ENCODE measurements at regions of chr4 and their contacts with region 1.

Region 1: DNA sequence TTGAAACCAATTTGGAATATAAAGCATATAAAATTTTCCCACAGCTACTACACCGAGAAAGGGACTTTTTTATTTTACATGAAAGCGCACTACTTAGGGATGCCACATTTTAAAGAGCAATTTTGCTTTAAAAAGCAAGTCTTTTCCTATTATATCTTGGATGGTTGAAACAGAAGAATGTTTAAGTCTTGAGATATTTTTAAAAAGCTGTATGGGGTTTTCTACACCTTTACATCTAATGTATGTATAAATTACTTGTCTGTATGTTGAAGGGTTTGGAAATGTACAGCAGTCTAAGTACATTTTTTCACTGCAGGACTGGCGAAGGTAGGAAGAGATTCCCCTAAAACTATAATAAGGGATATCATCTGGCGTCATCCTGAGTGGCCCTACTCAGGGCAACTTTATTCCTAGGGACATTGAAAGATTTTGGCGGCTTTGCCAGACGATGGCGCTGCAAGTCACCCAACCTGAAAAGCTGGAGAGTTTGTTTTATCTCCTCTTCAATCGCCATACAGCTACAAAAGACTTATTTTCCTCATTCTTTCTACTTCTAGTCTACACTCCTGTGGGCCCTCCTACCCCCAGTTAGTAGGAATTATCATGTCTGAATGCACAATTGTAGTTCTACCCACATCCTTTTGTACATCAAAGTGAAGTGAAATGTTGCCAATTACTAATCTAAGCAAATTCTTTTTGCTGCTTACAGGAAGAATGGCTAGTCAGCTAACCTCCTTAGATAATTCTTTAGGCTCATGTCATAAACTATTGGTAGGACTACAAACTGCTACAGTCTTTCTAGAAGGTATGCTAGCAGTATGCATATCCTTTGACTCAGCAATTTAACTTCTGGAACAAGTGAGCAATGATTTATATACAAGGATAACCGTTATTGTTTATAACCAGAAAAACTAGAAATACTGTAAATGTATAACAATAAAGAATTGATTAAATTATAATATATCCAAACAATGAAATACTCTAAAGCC is 782 bp upstream of the NEK1 start:
- DNase-seq: peak; percentile 84
- ATAC-seq: peak; percentile 28
- H3K4me3 Mint-ChIP-seq: peak overlapping the region; percentile 94
- H3K27ac Mint-ChIP-seq: peak overlapping the region; percentile 95
- H3K4me1 Mint-ChIP-seq: peaks cover 54% of the 10 kb centered on the region
- H3K27me3 Mint-ChIP-seq: no peaks in the 10 kb centered on the region

Region 2: GRCh38 chr4:169659716-169660670 is 46.8 kb after region 1 on chr4:
- CTCF ChIA-PET with region 1: interaction called, 11 read pairs
- DNase-seq: peak; percentile 84
- ATAC-seq: peak; percentile 98
- H3K4me3 Mint-ChIP-seq: peak overlapping the region; percentile 68
- H3K27ac Mint-ChIP-seq: peak overlapping the region; percentile 90
- H3K4me1 Mint-ChIP-seq: peaks cover 22% of the 10 kb centered on the region
- H3K27me3 Mint-ChIP-seq: no peaks in the 10 kb centered on the region

Region 3: GRCh38 chr4:169841776-169842175 is 228.6 kb after region 1 on chr4:
- CTCF ChIA-PET with region 1: no interaction called
- DNase-seq: no peak
- ATAC-seq: no peak
- H3K4me3 Mint-ChIP-seq: no peak overlapping the region
- H3K27ac Mint-ChIP-seq: no peak overlapping the region
- H3K4me1 Mint-ChIP-seq: no peaks in the 10 kb centered on the region
- H3K27me3 Mint-ChIP-seq: no peaks in the 10 kb centered on the region

Measured in activated CD8-positive, alpha-beta memory T cell treated with anti-CD3 and anti-CD28 coated beads, Interleukin-2, amount 10 ng/mL, durations not matched to agents 7 days and 5 days (primary cell).